SK-N-SH (cell line): ENCODE measurements at regions of chr17 and their contacts with region 1.

Region 1: GRCh38 chr17:59311130-59311920 is 20.1 kb upstream of the YPEL2 start:
- DNase-seq: peak; percentile 81
- H3K4me3 ChIP-seq: no peak overlapping the region
- H3K27ac ChIP-seq: no peak overlapping the region
- H3K4me1 ChIP-seq: no peaks in the 10 kb centered on the region
- H3K27me3 ChIP-seq: no peaks in the 10 kb centered on the region
- CTCF ChIP-seq: peak; percentile 98
- EP300 ChIP-seq: no peak
- RAD21 ChIP-seq: peak; percentile 99

Region 2: DNA sequence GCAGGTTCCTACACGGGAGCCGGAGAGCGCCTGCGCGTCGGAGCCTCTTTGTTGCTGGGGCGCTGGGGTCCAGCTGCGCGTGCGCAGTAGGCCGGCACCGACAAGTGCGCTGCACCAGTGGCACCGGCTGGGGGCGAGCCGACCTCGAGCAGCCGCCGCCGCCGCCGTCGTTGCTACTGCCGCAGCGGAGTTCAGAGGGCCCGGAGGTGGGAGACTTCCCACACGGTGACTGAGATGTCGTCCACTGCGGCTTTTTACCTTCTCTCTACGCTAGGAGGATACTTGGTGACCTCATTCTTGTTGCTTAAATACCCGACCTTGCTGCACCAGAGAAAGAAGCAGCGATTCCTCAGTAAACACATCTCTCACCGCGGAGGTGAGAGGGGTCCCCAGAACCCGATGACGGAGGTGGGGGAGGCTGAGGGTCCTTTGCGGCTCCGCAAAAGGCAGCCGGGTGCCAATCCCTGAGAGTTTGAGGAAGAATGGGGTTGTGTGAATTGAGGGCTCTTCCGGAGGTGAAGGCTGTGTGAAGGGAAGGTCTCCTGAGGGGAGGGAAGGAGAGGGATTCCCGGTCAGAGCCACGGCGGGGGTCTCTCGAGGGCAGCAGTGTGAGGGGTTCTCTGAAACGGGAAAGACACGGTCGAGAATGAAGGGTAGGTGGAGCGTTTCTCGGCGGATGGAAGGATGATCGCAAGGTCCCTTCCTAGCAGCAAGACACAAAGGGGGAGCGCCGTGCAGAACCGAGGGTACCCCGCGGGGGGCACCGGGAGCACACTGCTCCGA is 90.8 kb before region 1 on chr17 and contains the start of gene GDPD1:
- CTCF ChIA-PET with region 1: interaction called, 10 read pairs
- POLR2A ChIA-PET with region 1: no interaction called
- DNase-seq: peak; percentile 99
- H3K4me3 ChIP-seq: peak within 1 kb of the TSS; percentile 72 to 92
- H3K27ac ChIP-seq: peak within 1 kb of the TSS; percentile 56 to 88; a peak in 3 of 4 replicates
- H3K4me1 ChIP-seq: no peaks in the 10 kb centered on the region; a peak in 1 of 4 replicates
- H3K27me3 ChIP-seq: no peaks in the 10 kb centered on the region
- CTCF ChIP-seq: peak; percentile 71
- EP300 ChIP-seq: peak in 1 of 2 experiments; percentile 42; a peak in 2 of 4 replicates
- RAD21 ChIP-seq: peak; percentile 73
- polyA plus RNA-seq, gene GDPD1: 1.5 and 2.1 TPM in 2 replicates

Region 3: DNA sequence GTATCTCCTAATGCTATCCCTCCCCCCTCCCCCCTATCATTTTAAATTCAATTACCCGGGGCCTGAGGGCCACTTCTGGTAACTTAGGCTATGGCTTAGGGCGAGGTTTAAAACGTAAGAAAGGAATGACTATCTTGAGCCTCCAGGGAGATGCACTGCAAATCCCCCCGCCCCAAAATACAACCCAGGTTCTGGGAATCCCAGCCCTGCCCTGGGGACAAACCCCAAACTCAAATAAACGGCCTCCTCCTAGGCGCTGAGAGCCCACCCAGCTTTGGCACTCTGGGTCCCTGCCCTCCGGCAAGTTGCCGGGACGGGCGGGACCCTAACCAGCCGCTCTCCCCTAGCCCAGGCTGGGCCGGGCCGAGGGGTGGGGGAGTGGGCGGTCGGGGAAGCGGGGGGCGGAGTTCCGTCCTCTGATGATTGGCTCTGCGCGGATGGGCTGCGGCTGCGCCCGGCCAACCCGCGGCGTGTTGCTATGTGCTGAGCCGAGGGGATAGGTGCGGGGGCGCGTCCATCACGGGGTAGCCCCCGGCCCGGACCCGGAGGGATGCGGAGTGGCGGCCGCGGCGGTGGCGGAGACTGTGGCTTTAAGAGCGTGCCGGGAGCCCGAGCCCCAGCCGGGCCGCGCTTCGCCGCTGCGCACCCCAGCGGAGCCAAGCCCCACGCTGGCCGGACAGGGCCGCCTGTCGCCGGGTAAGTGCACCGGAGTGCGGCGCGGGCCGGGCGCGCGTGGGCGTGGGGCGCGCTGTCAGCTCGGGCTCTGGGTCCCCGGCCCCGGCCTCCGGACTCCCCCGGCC is 20.0 kb after region 1 on chr17 and contains the start of gene YPEL2:
- CTCF ChIA-PET with region 1: interaction called, 49 read pairs
- POLR2A ChIA-PET with region 1: no interaction called
- DNase-seq: peak; percentile 100
- H3K4me3 ChIP-seq: peak within 1 kb of the TSS; percentile 78 to 91
- H3K27ac ChIP-seq: peak within 1 kb of the TSS; percentile 58 to 88; a peak in 3 of 4 replicates
- H3K4me1 ChIP-seq: peaks cover 20 to 54% of the 10 kb centered on the region in 2 experiments
- H3K27me3 ChIP-seq: no peaks in the 10 kb centered on the region
- CTCF ChIP-seq: no peak
- EP300 ChIP-seq: peak in 1 of 2 experiments; percentile 79; a peak in 2 of 4 replicates
- RAD21 ChIP-seq: no peak
- polyA plus RNA-seq, gene YPEL2: 3.2 and 5.5 TPM in 2 replicates

Region 4: DNA sequence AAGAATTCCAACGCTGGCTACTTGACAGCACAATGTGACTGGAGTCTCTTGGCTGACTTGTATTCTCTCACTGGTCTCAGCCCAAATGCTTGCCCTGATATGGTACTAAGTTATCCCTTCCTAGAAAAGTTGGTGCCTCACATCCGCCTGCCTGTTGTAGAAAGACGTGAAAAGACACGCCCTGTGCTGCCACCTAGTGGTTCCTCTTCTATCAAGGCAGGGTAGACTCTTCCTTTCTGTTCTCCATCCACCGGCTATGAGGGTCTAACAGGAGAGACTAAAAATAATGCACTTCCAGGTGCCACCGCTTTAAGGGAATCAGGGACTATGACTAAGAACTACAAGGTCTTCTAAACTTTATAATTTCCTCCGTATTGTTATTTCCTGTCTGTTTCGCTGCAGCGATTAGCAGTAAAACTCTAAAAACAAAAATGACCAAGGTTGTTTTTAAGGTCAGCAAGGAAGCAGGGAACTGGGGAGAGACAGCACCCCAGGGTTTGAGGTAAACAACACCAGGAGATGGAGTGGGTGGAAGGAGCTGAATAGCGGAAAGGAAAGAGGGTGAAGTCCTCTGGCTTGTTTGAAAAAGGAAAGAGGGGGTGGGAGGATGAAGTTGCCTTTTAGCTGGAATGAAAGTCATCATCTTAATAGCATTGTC is 129.6 kb after region 1 on chr17:
- CTCF ChIA-PET with region 1: interaction called, 385 read pairs
- POLR2A ChIA-PET with region 1: no interaction called
- DNase-seq: peak; percentile 82
- H3K4me3 ChIP-seq: no peak overlapping the region
- H3K27ac ChIP-seq: no peak overlapping the region
- H3K4me1 ChIP-seq: peaks cover 0 to 4% of the 10 kb centered on the region in 2 experiments; a peak in 1 of 4 replicates
- H3K27me3 ChIP-seq: no peaks in the 10 kb centered on the region
- CTCF ChIP-seq: peak; percentile 99
- EP300 ChIP-seq: no peak
- RAD21 ChIP-seq: peak; percentile 100

Region 5: GRCh38 chr17:59521204-59522126 is 210.1 kb after region 1 on chr17:
- CTCF ChIA-PET with region 1: interaction called, 17 read pairs
- POLR2A ChIA-PET with region 1: no interaction called
- DNase-seq: peak; percentile 92
- H3K4me3 ChIP-seq: 0 out of 4 replicates have a peak overlapping the region, but pooled peaks of 1 of the 2 experiments have one; percentile 7
- H3K27ac ChIP-seq: peak overlapping the region in 1 of 2 experiments; percentile 70; a peak in 2 of 4 replicates
- H3K4me1 ChIP-seq: peaks cover 0 to 3% of the 10 kb centered on the region in 2 experiments; a peak in 2 of 4 replicates
- H3K27me3 ChIP-seq: no peaks in the 10 kb centered on the region
- CTCF ChIP-seq: peak; percentile 98
- EP300 ChIP-seq: peak in 1 of 2 experiments; percentile 49; a peak in 1 of 4 replicates
- RAD21 ChIP-seq: peak; percentile 98

Region 6: DNA sequence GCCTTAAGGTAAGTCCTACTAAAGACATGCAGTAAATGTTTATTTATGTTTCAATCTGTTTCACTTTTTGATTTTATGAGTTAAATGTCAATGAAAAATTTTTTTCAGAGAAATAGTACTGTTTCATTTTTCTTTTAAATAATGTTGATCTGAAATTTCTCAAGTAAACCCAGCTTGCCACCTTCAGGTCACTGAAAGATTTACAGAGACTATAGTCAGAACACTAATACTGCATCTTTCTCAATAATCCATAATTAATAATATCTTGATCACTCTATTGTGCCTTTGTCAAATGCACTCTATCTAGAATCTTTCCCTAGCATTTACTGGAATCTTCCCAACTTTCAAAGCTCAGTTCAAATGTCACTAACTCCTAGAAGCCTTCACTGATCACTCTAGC is 247.7 kb after region 1 on chr17:
- CTCF ChIA-PET with region 1: interaction called, 50 read pairs
- POLR2A ChIA-PET with region 1: no interaction called
- DNase-seq: peak; percentile 42
- H3K4me3 ChIP-seq: no peak overlapping the region
- H3K27ac ChIP-seq: no peak overlapping the region
- H3K4me1 ChIP-seq: no peaks in the 10 kb centered on the region
- H3K27me3 ChIP-seq: no peaks in the 10 kb centered on the region
- CTCF ChIP-seq: peak; percentile 69
- EP300 ChIP-seq: no peak
- RAD21 ChIP-seq: peak; percentile 86